ENCODE measurements at regions of chr19 and their contacts with region 1.

Region 1: DNA sequence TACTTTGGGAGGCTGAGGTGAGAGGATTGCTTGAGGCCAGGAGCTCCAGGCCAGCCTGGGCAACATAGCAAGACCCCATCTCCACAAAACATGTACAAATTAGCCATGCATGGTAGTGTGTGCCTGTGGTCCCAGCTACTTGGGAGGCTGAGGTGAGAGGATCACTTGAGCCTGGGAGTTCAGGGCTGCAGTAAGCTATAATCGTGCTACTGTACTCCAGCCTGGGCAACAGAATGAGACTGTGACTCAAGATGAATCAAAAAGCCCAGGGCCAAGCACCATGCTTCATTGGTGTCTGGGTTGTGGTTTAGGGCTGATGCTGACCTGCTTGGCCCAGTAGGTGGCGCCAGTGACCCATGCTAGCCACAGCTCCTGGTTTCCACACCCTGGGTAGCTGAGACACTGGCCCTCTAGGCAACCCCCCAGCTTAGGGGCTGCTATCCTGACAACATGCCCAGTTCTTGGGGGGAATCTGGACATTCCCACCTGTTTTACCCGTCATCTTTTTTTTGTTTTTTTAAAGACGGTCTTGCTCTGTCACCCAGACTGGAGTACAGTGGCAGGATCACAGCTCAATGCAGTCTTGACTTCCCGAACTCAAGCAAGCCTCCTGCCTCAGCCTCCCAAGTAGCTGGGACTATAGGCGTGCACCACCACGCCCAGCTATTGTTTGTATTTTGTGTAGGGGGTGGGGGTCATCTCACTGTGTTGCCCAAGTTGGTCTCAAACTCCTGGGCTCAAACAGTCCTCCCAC is 5.5 kb downstream of the CCDC124 start:
- DNase-seq: peak; percentile 42 to 65
- ATAC-seq: peak; percentile 72 to 80
- H3K4me3 ChIP-seq: no peak overlapping the region
- H3K27ac ChIP-seq: no peak overlapping the region
- H3K4me1 ChIP-seq: peaks cover 9 to 16% of the 10 kb centered on the region in 2 donors
- H3K27me3 ChIP-seq: no peaks in the 10 kb centered on the region
- CTCF ChIP-seq: peak; percentile 84 to 94 (median 92)
- POLR2A ChIP-seq: no peak

Region 2: DNA sequence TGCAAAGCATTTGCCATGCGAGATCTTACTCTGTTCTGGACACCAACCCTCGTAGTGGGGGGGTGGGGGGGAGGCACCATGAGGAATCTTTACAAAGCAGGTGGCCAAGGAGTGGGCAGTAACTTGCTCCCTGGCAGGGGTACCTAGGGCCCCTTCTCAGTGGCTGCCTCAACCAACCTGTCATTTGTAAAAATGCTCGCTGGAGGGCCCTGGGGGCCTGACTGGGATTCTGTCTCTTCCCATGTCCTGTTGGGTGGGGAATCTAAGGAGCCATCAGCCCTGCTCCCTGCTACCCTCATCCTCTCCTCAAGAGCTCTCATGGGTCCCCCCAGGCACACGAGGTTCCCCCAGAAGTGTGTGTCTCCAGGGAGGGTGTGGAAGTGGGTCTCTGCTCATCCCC is 30.1 kb after region 1 on chr19:
- in situ Hi-C with region 1: no loop called
- intact Hi-C with region 1: no loop called
- DNase-seq: no peak
- ATAC-seq: no peak
- H3K4me3 ChIP-seq: no peak overlapping the region
- H3K27ac ChIP-seq: no peak overlapping the region
- H3K4me1 ChIP-seq: no peaks in the 10 kb centered on the region
- H3K27me3 ChIP-seq: peaks cover 29 to 43% (median 40%) of the 10 kb centered on the region in 3 donors
- CTCF ChIP-seq: no peak
- POLR2A ChIP-seq: no peak

Region 3: GRCh38 chr19:17993076-17993813 is 55.0 kb after region 1 on chr19:
- in situ Hi-C with region 1: loop called in 3 of 4 experiments (anchors 5 to 10 kb)
- intact Hi-C with region 1: loop called (anchors 1 kb)
- DNase-seq: no peak
- ATAC-seq: no peak
- H3K4me3 ChIP-seq: no peak overlapping the region
- H3K27ac ChIP-seq: no peak overlapping the region
- H3K4me1 ChIP-seq: no peaks in the 10 kb centered on the region
- H3K27me3 ChIP-seq: no peaks in the 10 kb centered on the region
- CTCF ChIP-seq: no peak
- POLR2A ChIP-seq: no peak

Region 4: GRCh38 chr19:18000935-18001778 is 62.9 kb after region 1 on chr19:
- in situ Hi-C with region 1: loop called in 1 of 4 experiments (anchors 10 kb)
- intact Hi-C with region 1: loop called (anchors 1 kb)
- DNase-seq: peak; percentile 73 to 78
- ATAC-seq: peak; percentile 61 to 68
- H3K4me3 ChIP-seq: peak overlapping the region; percentile 58 to 64 (median 60)
- H3K27ac ChIP-seq: peak overlapping the region; percentile 82 to 83 (median 82)
- H3K4me1 ChIP-seq: peaks cover 0 to 5% of the 10 kb centered on the region in 2 donors
- H3K27me3 ChIP-seq: peaks cover 0 to 12% (median 6%) of the 10 kb centered on the region in 3 donors
- CTCF ChIP-seq: peak in 1 of 5 experiments; percentile 14
- POLR2A ChIP-seq: peak; percentile 68 to 81

Region 5: GRCh38 chr19:18069383-18069782 is 131.1 kb after region 1 on chr19:
- in situ Hi-C with region 1: loop called in 3 of 4 experiments (anchors 5 to 25 kb)
- intact Hi-C with region 1: no loop called
- DNase-seq: no peak
- ATAC-seq: no peak
- H3K4me3 ChIP-seq: no peak overlapping the region
- H3K27ac ChIP-seq: no peak overlapping the region
- H3K4me1 ChIP-seq: no peaks in the 10 kb centered on the region
- H3K27me3 ChIP-seq: peaks cover 3 to 10% (median 5%) of the 10 kb centered on the region in 3 donors
- CTCF ChIP-seq: no peak
- POLR2A ChIP-seq: no peak